Transverse colon (tissue), 4 donors: ENCODE measurements at regions of chr16 and their contacts with region 1.

Region 1: DNA sequence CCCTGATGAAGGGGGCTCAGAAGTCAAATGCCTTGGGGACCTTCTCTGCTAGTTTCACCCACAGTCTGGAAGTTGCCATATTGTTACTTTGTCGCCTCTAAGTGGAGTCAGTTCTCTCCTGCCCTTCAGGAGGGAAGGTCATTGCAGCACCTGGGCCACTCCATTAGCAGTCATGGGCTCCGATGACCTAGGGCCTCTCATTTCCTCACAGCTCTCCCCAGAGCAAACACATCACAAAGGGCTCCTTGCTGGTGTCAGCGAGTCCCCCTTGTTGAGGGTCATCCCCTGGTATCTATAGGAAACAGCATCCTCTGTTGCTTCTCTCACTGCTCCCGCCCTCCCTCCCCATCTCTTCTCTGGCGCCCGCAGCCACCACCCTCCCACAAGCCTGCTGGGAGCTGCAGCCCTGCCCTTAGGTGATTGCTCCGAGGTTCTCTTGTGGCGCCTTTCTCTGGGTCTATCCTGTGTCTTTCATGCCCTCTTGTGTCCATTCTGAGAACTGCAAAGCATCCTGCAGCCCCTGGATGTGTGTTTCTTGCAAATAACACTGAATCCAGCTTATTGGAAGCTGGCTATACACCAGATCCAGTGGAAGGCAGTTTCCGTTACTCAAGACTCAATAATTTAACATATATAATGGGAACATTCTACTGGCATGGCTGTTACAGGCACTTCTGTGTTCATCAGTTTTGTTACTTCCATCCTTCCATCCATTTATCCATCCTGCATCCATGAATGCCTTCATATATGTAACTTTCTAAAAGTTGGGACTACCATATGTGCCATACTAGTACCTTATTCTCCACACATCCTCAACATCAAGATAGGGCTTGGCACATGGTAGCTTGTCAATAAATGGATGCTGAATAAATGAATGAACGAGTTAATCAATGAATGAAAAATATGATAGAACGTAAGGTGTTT is 21.2 kb downstream of the PDILT start:
- DNase-seq: peak; percentile 47
- H3K4me3 ChIP-seq: no peak overlapping the region
- H3K27ac ChIP-seq: no peak overlapping the region
- H3K4me1 ChIP-seq: no peaks in the 10 kb centered on the region
- H3K27me3 ChIP-seq: peaks cover 8% of the 10 kb centered on the region
- CTCF ChIP-seq: peak; percentile 63 to 79 (median 73)
- EP300 ChIP-seq: no peak
- POLR2A ChIP-seq: no peak

Region 2: DNA sequence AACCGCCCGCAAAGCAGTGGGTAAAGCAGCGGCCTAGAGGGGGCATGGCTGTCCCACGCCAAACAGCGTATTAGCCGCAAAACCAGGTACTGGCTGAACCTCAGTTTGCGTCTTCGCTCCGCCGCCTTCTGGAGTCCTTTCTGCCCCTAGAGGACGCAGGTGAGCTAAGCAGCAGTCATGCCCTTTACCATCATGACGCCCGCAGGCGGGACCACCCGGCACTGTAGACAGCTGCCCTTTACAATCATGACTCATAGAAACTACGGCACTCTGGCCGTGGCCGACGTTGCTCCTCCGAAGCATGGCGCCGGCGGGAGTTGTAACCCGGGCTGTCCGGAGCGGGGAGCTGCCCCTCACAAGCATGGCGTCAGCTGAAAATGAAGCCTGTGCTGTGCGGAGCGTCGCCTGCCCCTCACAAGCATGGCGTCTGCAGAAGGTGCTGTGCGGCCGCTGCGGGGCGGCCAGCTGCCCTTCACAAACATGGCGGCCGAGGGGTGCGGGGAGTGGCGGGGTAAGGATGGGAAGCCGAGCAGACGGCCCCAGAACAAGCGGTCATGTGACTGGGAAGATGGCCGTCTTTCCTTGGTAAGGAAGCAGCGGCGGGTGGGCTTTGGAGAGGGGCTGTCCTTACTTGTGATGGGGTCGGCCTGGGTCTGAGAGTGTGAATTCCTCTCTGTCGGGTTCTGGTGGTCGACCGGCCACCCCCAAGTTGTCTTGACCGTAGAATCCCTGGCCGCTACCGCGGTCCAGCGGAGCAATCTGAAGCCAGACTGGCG is 828.0 kb before region 1 on chr16 and contains the start of gene VPS35L:
- in situ Hi-C with region 1: loop called in 1 of 4 experiments (anchors 25 kb)
- intact Hi-C with region 1: no loop called
- DNase-seq: peak; percentile 98
- H3K4me3 ChIP-seq: peak within 1 kb of the TSS; percentile 65 to 94 (median 83)
- H3K27ac ChIP-seq: peak within 1 kb of the TSS; percentile 88 to 94 (median 92)
- H3K4me1 ChIP-seq: peaks cover 0 to 20% (median 14%) of the 10 kb centered on the region in 4 donors
- H3K27me3 ChIP-seq: no peaks in the 10 kb centered on the region
- CTCF ChIP-seq: peak; percentile 61 to 93 (median 80)
- EP300 ChIP-seq: no peak
- POLR2A ChIP-seq: peak; percentile 45
- total RNA-seq, gene VPS35L: 40.0 to 89.8 (median 51.5) TPM

Region 3: DNA sequence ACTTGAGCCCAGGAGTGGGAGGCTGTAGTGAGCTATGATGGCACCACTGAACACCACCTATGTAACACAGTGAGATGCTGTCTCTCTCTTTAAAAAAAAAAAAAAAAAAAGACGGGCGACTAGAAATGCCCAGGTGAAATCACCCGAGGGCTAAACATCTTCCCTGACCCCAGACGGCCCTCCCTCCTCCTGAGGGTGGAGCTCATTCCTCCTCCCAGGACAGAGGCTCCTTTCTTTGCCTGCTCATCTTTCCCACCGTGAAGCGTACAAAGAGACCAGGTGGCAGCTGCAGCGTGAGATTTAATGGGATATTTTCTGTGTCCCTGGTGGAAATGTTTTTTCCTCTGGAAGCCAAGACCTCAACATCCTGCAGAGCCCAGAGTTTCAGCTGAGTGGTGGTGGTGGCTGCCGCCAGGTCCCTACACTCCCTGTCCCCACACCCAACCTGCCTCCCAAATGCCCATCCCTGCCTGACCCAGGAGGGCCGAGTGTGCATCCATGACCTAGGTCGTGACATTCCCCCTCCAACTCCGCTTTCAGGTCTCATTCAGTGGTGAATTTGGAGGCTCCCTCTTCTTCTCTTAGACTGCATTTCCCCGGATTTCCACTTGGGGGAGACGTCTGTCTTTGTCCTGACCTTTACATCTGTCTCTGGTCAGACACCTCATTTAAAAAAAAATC is 484.3 kb before region 1 on chr16:
- in situ Hi-C with region 1: loop called in 3 of 4 experiments (anchors 10 to 25 kb)
- intact Hi-C with region 1: no loop called
- DNase-seq: peak; percentile 39
- H3K4me3 ChIP-seq: no peak overlapping the region
- H3K27ac ChIP-seq: no peak overlapping the region
- H3K4me1 ChIP-seq: peaks cover 0 to 3% (median 0%) of the 10 kb centered on the region in 4 donors
- H3K27me3 ChIP-seq: no peaks in the 10 kb centered on the region
- CTCF ChIP-seq: peak; percentile 66 to 79 (median 68)
- EP300 ChIP-seq: no peak
- POLR2A ChIP-seq: no peak

Region 4: DNA sequence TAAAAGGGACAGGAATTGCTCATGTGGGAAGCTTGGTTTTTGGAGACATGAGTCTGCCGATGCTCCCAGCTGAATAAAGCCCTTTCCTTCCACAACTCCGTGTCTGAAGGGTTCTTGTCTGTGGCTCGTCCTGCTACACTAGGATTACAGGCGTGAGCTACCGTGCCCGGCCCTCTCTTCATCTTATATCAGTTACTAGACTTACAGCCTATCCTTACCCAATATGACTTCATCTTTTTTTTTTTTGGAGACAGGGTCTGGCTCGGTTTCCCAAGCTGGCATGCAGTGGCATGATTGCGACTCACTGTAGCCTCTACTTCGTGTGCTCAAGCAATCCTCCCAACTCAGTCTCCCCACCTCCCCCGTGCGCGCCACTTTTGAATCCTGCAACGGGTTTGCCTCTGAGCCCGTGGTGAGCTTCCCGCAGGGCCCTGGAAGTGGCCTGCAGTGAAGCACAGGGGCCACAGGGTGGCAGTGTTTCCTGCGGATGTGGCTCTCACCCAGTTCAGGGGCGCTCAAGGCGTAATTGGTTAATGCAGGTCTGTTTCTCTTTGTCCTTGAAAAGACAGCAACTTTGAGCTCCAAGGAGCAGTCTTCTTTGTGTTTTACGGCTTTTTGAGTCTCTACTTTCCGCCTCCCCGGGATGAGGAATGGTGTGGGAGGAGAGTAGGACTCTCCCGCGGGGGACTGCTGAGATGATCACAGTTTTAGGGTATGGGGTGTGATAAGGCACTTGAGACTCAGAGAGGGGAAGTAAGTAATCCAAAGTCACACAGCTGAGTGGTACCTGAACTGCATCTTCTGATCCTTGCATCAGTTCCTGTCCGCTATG is 476.0 kb before region 1 on chr16:
- in situ Hi-C with region 1: loop called in 3 of 4 experiments (anchors 5 to 25 kb)
- intact Hi-C with region 1: loop called (anchors 5 kb)
- DNase-seq: peak; percentile 67
- H3K4me3 ChIP-seq: no peak overlapping the region
- H3K27ac ChIP-seq: no peak overlapping the region
- H3K4me1 ChIP-seq: no peaks in the 10 kb centered on the region
- H3K27me3 ChIP-seq: no peaks in the 10 kb centered on the region
- CTCF ChIP-seq: peak; percentile 83 to 95 (median 93)
- EP300 ChIP-seq: no peak
- POLR2A ChIP-seq: no peak

Region 5: GRCh38 chr16:19912455-19913339 is 470.7 kb before region 1 on chr16:
- in situ Hi-C with region 1: loop called in 3 of 4 experiments (anchors 5 to 25 kb)
- intact Hi-C with region 1: loop called (anchors 5 kb)
- DNase-seq: no peak
- H3K4me3 ChIP-seq: no peak overlapping the region
- H3K27ac ChIP-seq: no peak overlapping the region
- H3K4me1 ChIP-seq: no peaks in the 10 kb centered on the region
- H3K27me3 ChIP-seq: no peaks in the 10 kb centered on the region
- CTCF ChIP-seq: no peak
- EP300 ChIP-seq: no peak
- POLR2A ChIP-seq: no peak